IMR-90 (cell line): ENCODE measurements at regions of chr17 and their contacts with region 1.

Region 1: DNA sequence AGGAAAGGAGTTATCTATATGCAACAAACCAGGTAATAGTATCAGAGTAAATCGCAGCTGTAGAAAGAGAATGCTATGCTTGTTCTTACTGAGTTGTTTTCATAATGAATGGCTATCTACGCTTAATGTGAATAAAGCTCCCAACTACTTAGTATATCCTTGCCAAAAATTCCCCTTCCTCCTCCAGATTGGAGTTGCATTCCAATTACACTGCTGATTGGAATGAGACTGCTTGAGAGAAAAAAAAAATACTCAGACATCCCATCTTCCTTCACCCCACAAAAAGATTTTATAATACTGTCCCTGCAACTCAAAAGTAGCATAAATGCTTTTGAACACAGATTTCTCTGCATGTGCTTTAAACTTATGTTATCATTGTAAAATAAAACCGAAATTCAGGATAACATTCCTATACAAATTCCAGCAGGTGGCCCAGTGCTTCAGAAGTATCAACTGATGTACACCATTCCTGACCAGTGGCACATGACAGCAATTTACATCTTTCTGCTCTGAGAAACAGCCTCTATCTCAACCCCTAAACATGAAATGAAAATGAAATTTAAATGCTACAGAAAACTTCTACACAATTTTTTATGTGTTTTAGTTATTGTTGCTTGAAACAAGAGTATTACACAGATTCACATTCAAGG is 47.0 kb downstream of the SMURF2 start:
- DNase-seq: peak; percentile 80
- ATAC-seq: peak; percentile 5
- H3K4me3 ChIP-seq: no peak overlapping the region
- H3K27ac ChIP-seq: no peak overlapping the region
- H3K4me1 ChIP-seq: peaks cover 29% of the 10 kb centered on the region
- H3K27me3 ChIP-seq: no peaks in the 10 kb centered on the region
- CTCF ChIP-seq: no peak
- POLR2A ChIP-seq: peak; percentile 23; the same call in 1 of the 2 replicates
- RAD21 ChIP-seq: no peak

Region 2: DNA sequence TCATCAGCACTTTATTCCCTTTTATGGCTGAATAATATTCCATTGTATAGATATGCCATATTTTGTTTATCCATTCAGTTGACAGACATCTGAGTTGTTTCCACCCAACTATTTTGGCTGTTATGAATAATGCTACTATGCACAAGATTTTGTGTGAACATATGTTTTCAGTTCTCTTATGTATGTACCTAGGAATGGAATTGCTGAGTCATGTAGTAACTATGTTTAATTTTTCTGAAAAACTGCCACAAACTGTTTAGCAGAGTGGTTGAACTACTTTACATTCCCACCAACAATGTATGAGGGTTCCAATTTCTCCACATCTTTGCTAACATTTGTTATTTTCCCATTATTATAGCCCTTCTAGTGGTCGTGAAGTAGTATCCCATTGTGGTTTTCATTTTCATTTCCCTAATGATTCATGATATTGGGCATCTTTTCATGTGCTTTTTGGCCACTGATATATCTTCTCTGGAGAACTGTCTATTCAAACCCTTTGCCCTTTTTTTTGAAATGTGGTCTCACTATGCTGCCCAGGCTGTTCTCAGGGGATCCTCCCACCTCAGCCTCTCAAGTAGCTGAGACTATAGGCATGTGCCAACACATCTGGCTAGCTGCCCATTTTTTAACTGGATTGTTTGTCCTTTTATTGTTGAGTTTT is 20.6 kb after region 1 on chr17:
- CTCF ChIA-PET with region 1: no interaction called
- POLR2A ChIA-PET with region 1: no interaction called
- dilution Hi-C with region 1: no loop called
- in situ Hi-C with region 1: no loop called
- intact Hi-C with region 1: no loop called
- DNase-seq: peak; percentile 88
- ATAC-seq: peak; percentile 28
- H3K4me3 ChIP-seq: no peak overlapping the region
- H3K27ac ChIP-seq: peak overlapping the region; percentile 78; the same call in 1 of the 2 replicates
- H3K4me1 ChIP-seq: peaks cover 17% of the 10 kb centered on the region
- H3K27me3 ChIP-seq: no peaks in the 10 kb centered on the region
- CTCF ChIP-seq: no peak
- POLR2A ChIP-seq: no peak
- RAD21 ChIP-seq: no peak

Region 3: DNA sequence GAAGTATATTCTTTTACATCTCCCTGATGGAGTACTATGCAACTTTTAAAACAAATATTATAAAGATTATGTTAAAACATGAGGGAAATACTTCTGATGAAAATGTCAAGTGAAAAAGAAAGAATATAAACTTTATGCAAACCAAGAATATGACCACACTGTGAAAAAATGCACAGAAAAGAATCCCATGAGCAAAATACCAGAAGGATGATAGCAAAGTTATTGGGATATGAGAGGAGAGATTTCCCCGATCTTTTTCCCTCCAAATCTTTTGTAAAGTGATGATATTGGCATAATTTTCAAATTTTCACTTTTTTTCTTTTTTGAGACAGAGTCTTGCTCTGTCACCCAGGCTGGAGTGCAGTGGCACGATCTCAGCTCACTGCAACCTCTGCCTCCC is 83.6 kb after region 1 on chr17:
- CTCF ChIA-PET with region 1: no interaction called
- POLR2A ChIA-PET with region 1: interaction called, 11 read pairs
- dilution Hi-C with region 1: no loop called
- in situ Hi-C with region 1: no loop called
- intact Hi-C with region 1: no loop called
- DNase-seq: peak; percentile 78
- ATAC-seq: peak; percentile 50
- H3K4me3 ChIP-seq: no peak overlapping the region
- H3K27ac ChIP-seq: peak overlapping the region; percentile 75
- H3K4me1 ChIP-seq: peaks cover 10% of the 10 kb centered on the region
- H3K27me3 ChIP-seq: no peaks in the 10 kb centered on the region
- CTCF ChIP-seq: no peak
- POLR2A ChIP-seq: no peak
- RAD21 ChIP-seq: no peak